ENCODE measurements at regions of chr1 and their contacts with region 1.

Region 1: GRCh38 chr1:206106328-206107167 is 10.6 kb downstream of the AVPR1B start:
- DNase-seq: peak; percentile 88
- ATAC-seq: peak; percentile 92
- H3K4me3 ChIP-seq: no peak overlapping the region
- H3K4me3 Mint-ChIP-seq: no peak overlapping the region
- H3K27ac ChIP-seq: no peak overlapping the region
- H3K27ac Mint-ChIP-seq: peak overlapping the region; percentile 60
- H3K4me1 ChIP-seq: peaks cover 12% of the 10 kb centered on the region in 2 donors
- H3K4me1 Mint-ChIP-seq: peaks cover 28% of the 10 kb centered on the region
- H3K27me3 ChIP-seq: no peaks in the 10 kb centered on the region
- H3K27me3 Mint-ChIP-seq: no peaks in the 10 kb centered on the region
- CTCF ChIP-seq: peak; percentile 94

Region 2: GRCh38 chr1:205919026-205919746 is 187.4 kb before region 1 on chr1:
- CTCF ChIA-PET with region 1: interaction called, 32 read pairs
- POLR2A ChIA-PET with region 1: no interaction called
- intact Hi-C with region 1: loop called (anchors 1 kb)
- DNase-seq: peak; percentile 80
- ATAC-seq: peak; percentile 71
- H3K4me3 ChIP-seq: no peak overlapping the region
- H3K4me3 Mint-ChIP-seq: no peak overlapping the region
- H3K27ac ChIP-seq: no peak overlapping the region
- H3K27ac Mint-ChIP-seq: no peak overlapping the region
- H3K4me1 ChIP-seq: no peaks in the 10 kb centered on the region
- H3K4me1 Mint-ChIP-seq: peaks cover 2% of the 10 kb centered on the region
- H3K27me3 ChIP-seq: no peaks in the 10 kb centered on the region
- H3K27me3 Mint-ChIP-seq: peaks cover 4% of the 10 kb centered on the region
- CTCF ChIP-seq: peak; percentile 93

Region 3: GRCh38 chr1:206001476-206001888 is 105.1 kb before region 1 on chr1:
- CTCF ChIA-PET with region 1: interaction called, 15 read pairs
- POLR2A ChIA-PET with region 1: no interaction called
- intact Hi-C with region 1: no loop called
- DNase-seq: no peak
- ATAC-seq: no peak
- H3K4me3 ChIP-seq: no peak overlapping the region
- H3K4me3 Mint-ChIP-seq: no peak overlapping the region
- H3K27ac ChIP-seq: no peak overlapping the region
- H3K27ac Mint-ChIP-seq: no peak overlapping the region
- H3K4me1 ChIP-seq: no peaks in the 10 kb centered on the region
- H3K4me1 Mint-ChIP-seq: peaks cover 3% of the 10 kb centered on the region
- H3K27me3 ChIP-seq: no peaks in the 10 kb centered on the region
- H3K27me3 Mint-ChIP-seq: no peaks in the 10 kb centered on the region
- CTCF ChIP-seq: no peak

Region 4: GRCh38 chr1:206041640-206042039 is 64.9 kb before region 1 on chr1:
- CTCF ChIA-PET with region 1: interaction called, 682 read pairs
- POLR2A ChIA-PET with region 1: no interaction called
- intact Hi-C with region 1: no loop called
- DNase-seq: peak; percentile 81
- ATAC-seq: peak; percentile 89
- H3K4me3 ChIP-seq: peak overlapping the region in 2 of 5 experiments; percentile 3 to 4
- H3K4me3 Mint-ChIP-seq: peak overlapping the region; percentile 78
- H3K27ac ChIP-seq: peak overlapping the region; percentile 72 to 82
- H3K27ac Mint-ChIP-seq: peak overlapping the region; percentile 95
- H3K4me1 ChIP-seq: peaks cover 75 to 77% of the 10 kb centered on the region in 2 donors
- H3K4me1 Mint-ChIP-seq: peaks cover 71% of the 10 kb centered on the region
- H3K27me3 ChIP-seq: no peaks in the 10 kb centered on the region
- H3K27me3 Mint-ChIP-seq: no peaks in the 10 kb centered on the region
- CTCF ChIP-seq: no peak

Region 5: GRCh38 chr1:206059355-206059915 is 47.1 kb before region 1 on chr1:
- CTCF ChIA-PET with region 1: interaction called, 12 read pairs
- POLR2A ChIA-PET with region 1: no interaction called
- intact Hi-C with region 1: no loop called
- DNase-seq: no peak
- ATAC-seq: no peak
- H3K4me3 ChIP-seq: no peak overlapping the region
- H3K4me3 Mint-ChIP-seq: peak overlapping the region; percentile 24
- H3K27ac ChIP-seq: peak overlapping the region in 1 of 2 donors; percentile 70
- H3K27ac Mint-ChIP-seq: peak overlapping the region; percentile 92
- H3K4me1 ChIP-seq: peaks cover 22 to 43% of the 10 kb centered on the region in 2 donors
- H3K4me1 Mint-ChIP-seq: peaks cover 63% of the 10 kb centered on the region
- H3K27me3 ChIP-seq: no peaks in the 10 kb centered on the region
- H3K27me3 Mint-ChIP-seq: no peaks in the 10 kb centered on the region
- CTCF ChIP-seq: no peak

Region 6: DNA sequence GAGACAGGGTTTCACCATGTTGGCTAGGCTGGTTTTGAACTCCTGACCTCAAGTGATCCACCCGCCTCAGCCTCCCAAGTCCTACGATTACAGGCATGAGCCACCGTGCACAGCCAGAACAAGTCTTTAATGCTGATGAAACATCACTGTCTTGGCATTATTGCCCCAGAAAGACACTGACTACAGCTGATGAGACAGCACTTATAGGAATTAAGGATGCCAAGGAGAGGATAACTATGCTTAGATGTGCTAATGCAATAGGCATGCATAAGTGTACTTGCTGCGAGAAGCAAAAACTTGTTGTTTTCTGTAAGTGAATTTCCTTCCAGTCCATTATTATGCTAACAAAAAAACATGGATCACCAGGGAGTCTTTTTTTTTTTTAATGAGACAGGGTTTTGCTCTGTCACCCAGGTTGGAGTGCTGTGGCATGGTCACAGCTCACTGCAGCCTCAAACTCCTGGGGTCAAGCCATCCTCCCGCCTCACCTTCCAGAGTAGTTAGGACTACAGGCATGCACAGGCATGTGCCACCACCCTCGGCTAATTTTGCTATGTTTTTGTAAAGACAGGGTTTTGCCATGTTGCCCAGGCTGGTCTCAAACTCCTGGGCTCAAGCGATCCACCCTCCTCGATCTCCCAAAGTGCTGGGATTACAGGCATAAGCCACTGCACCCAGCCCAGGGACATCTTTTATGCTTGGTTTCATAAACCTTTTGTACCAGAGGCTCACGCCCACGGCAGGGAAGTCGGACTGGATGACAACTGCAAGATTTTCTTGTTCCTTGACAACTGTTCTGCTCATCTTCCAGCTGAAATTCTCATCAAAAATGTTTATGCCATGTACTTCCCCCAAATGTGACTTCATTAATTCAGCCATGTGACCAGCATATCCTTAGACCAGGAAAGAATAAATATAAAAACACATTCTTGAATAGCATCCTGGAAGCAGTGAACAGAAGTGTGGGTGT is 30.5 kb before region 1 on chr1:
- CTCF ChIA-PET with region 1: interaction called, 44 read pairs
- POLR2A ChIA-PET with region 1: no interaction called
- intact Hi-C with region 1: no loop called
- DNase-seq: no peak
- ATAC-seq: no peak
- H3K4me3 ChIP-seq: no peak overlapping the region
- H3K4me3 Mint-ChIP-seq: no peak overlapping the region
- H3K27ac ChIP-seq: no peak overlapping the region
- H3K27ac Mint-ChIP-seq: no peak overlapping the region
- H3K4me1 ChIP-seq: peaks cover 11 to 14% of the 10 kb centered on the region in 2 donors
- H3K4me1 Mint-ChIP-seq: peaks cover 26% of the 10 kb centered on the region
- H3K27me3 ChIP-seq: no peaks in the 10 kb centered on the region
- H3K27me3 Mint-ChIP-seq: no peaks in the 10 kb centered on the region
- CTCF ChIP-seq: no peak

Measured in B cell (primary cell).